Panc1 (cell line): ENCODE measurements at regions of chr2 and their contacts with region 1.

Region 1: DNA sequence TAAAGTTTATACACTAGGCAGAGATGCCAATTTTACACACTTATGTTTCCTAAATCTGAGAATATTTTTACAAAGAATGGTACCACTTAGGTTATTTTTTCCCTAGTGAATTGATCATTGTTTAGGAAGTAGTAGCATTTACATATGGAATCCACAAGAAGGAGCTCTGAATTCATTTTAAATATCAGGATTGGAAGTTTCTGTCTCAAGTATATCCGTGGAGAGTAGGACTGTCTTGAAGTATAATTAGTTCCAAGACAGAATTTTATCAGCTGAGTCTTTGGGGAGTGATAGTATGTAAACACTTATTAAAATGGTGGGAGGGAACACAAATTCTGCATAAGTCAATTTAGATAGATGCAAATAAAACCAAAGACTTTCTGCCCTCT is 82.3 kb upstream of the FAM98A start:
- DNase-seq: no peak
- ATAC-seq: no peak
- H3K4me3 ChIP-seq: no peak overlapping the region
- H3K27ac ChIP-seq: no peak overlapping the region
- H3K4me1 ChIP-seq: no peaks in the 10 kb centered on the region
- H3K27me3 ChIP-seq: no peaks in the 10 kb centered on the region
- CTCF ChIP-seq: peak; percentile 53; the same call in 1 of the 2 replicates

Region 2: GRCh38 chr2:34570266-34570872 is 889.0 kb after region 1 on chr2:
- CTCF ChIA-PET with region 1: no interaction called
- POLR2A ChIA-PET with region 1: no interaction called
- in situ Hi-C with region 1: no loop called
- intact Hi-C with region 1: loop called (anchors 5 kb)
- DNase-seq: no peak
- ATAC-seq: 0 out of 2 replicates have a peak, but pooled peaks have one; percentile 42
- H3K4me3 ChIP-seq: no peak overlapping the region
- H3K27ac ChIP-seq: no peak overlapping the region
- H3K4me1 ChIP-seq: no peaks in the 10 kb centered on the region
- H3K27me3 ChIP-seq: no peaks in the 10 kb centered on the region
- CTCF ChIP-seq: peak; percentile 51